ENCODE measurements at regions of chr13 and their contacts with region 1.

Region 1: DNA sequence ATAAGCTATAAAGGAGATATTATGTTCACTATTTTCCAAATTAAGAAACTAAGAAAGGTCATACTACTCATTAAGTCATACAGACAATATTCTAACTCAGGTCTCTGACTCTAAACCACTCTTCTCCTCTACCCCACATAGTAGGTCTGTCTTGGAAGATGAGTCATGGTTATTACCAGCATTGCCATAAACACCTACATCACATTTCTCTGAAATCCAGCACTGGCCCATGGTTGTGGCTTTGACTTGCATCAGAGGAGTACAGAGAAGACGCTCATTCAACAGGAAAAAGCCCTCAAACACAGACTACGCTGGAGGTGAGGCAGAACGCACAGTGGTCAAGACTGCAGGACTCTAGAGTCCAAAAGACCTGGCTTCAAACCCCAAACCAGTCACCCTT is 476.8 kb downstream of the COG6 start:
- DNase-seq: no peak
- H3K4me3 Mint-ChIP-seq: no peak overlapping the region
- H3K27ac Mint-ChIP-seq: peak overlapping the region; percentile 29
- H3K4me1 Mint-ChIP-seq: peaks cover 21% of the 10 kb centered on the region
- H3K27me3 Mint-ChIP-seq: no peaks in the 10 kb centered on the region

Region 2: DNA sequence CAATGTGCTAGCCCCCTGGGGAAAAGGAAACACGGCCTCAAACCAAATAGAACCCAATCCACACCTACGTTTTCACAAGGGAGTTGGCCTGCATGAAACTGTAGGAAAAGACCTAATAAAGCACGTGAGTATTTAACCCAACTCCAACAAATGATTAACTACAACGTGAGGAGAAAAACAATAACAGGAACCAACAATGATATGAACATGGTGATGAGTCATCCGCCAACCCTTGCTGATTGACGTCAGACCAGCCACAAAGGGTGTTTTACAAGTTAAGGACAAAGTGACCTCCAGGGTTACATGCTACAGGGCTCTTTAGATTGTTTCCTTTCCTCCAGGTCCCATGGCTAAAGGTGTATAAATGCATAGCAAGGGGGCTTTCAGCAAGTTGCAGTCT is 16.2 kb before region 1 on chr13:
- intact Hi-C with region 1: loop called (anchors 2 kb)
- DNase-seq: no peak
- H3K4me3 Mint-ChIP-seq: no peak overlapping the region
- H3K27ac Mint-ChIP-seq: peak overlapping the region; percentile 90
- H3K4me1 Mint-ChIP-seq: peaks cover 23% of the 10 kb centered on the region
- H3K27me3 Mint-ChIP-seq: peaks cover 2% of the 10 kb centered on the region

Region 3: GRCh38 chr13:40819797-40820315 is 687.6 kb after region 1 on chr13:
- intact Hi-C with region 1: no loop called
- DNase-seq: no peak
- H3K4me3 Mint-ChIP-seq: no peak overlapping the region
- H3K27ac Mint-ChIP-seq: no peak overlapping the region
- H3K4me1 Mint-ChIP-seq: peaks cover 11% of the 10 kb centered on the region
- H3K27me3 Mint-ChIP-seq: no peaks in the 10 kb centered on the region

Measured in activated T-helper 2 cell treated with anti-CD3 and anti-CD28 coated beads, Interferon-gamma antibody, Interleukin-2, Interleukin-4, amounts not matched to agents 10 μg/mL and 5 μg/mL and 100 μg/mL, durations not matched to agents 14 hours and 24 hours and 36 hours (primary cell).